ENCODE measurements at regions of chr7 and their contacts with region 1.

Region 1: GRCh38 chr7:26200444-26201246 is at the start of gene HNRNPA2B1:
- DNase-seq: peak; percentile 93
- H3K4me3 ChIP-seq: peak within 1 kb of the TSS; percentile 98
- CTCF ChIP-seq: no peak

Region 2: GRCh38 chr7:25862260-25863037 is 338.2 kb before region 1 on chr7:
- CTCF ChIA-PET with region 1: no interaction called
- POLR2A ChIA-PET with region 1: interaction called, 18 read pairs
- DNase-seq: peak; percentile 100
- H3K4me3 ChIP-seq: peak overlapping the region; percentile 53; the same call in 1 of the 2 replicates
- CTCF ChIP-seq: no peak

Region 3: DNA sequence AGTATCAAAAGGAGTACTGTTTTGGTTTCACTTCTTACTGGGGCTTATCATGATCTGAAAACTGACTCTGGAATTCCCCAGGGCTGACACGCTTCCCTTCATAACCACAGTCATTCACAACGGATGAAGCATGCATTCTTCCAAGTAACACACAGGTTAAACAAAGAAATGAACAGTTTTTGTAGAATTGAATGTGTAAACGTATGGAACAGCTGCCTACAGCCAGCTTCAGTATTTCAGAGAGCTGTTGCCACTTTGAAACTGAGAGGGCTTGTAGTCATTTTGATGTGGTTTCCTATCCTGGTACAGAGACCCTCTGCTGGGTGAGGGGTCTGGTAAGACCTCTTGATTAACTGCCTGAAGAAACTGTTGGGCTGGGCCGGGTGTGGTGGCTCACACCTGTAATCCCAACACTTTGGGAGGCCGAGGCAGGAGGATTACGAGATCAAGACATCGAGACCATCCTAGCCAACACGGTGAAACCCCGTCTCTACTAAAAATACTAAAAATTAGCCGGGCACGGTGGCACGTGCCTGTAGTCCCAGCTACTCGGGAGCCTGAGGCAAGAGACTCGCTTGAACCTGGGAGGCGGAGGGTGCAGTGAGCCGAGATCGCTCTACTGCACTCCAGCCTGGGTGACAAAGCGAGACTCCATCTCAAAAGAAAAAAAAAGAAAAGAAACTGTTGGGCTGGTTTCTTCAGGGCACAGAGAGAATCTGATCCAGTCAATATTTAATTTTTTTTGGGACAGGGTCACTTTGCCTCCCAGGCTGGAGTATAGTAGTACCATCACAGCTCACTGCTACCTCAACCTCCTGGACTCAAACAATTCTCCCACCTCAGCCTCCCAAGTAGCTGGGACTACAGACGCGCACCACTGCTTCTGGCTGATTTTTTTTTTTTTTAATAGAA is 43.9 kb before region 1 on chr7:
- CTCF ChIA-PET with region 1: interaction called, 19 read pairs
- POLR2A ChIA-PET with region 1: interaction called, 12 read pairs
- DNase-seq: peak; percentile 74
- H3K4me3 ChIP-seq: peak overlapping the region; percentile 6; the same call in 1 of the 2 replicates
- CTCF ChIP-seq: no peak

Region 4: DNA sequence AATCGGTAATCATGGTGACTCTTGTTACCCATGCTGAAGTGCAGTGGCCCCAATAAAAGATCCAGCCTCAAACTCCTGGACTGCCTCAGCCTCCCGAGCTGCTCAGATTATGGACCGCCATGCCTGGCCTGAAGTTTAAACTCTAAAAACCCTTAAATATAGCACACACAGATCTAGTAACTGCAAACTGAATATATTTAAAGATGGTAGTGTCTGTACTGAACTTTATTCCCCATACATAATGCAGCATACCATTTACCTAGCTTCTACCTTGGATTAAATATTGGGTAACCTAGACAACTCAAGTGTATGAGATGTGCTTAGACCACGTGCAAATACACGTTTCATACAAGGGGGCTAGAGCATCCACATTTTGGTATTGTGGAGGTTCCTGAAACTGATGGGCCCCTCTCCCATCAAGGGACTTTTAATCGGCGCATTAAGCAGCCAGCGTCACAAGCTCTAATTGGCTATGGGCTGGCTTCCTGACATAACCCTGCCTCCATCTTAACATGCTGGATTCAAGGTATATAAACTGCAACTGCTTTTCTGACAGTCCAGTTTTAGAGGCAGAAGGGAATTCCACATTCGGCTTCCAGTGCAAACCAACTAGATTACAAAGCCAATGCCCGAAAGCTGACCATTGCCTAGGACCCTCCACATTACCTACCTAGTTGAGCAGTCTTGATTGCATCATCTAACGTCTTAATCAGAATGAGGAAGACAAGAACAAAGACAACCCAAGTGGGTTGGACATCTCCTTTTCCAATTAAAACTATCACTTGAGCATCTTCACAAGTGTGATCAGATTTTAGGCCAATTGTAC is 13.1 kb before region 1 on chr7:
- CTCF ChIA-PET with region 1: interaction called, 59 read pairs
- POLR2A ChIA-PET with region 1: interaction called, 24 read pairs
- DNase-seq: no peak
- H3K4me3 ChIP-seq: no peak overlapping the region
- CTCF ChIP-seq: no peak

Measured in AG04449 (cell line).